PC-9 (cell line): ENCODE measurements at regions of chr17 and their contacts with region 1.

Region 1: GRCh38 chr17:82205719-82206508 is 6.7 kb downstream of the CCDC57 start:
- DNase-seq: peak; percentile 83 to 92
- H3K4me3 ChIP-seq: peak overlapping the region; percentile 13; the same call in 1 of the 2 replicates
- H3K27ac ChIP-seq: peak overlapping the region; percentile 82
- H3K4me1 ChIP-seq: peaks cover 28% of the 10 kb centered on the region
- H3K27me3 ChIP-seq: no peaks in the 10 kb centered on the region
- CTCF ChIP-seq: peak; percentile 87

Region 2: DNA sequence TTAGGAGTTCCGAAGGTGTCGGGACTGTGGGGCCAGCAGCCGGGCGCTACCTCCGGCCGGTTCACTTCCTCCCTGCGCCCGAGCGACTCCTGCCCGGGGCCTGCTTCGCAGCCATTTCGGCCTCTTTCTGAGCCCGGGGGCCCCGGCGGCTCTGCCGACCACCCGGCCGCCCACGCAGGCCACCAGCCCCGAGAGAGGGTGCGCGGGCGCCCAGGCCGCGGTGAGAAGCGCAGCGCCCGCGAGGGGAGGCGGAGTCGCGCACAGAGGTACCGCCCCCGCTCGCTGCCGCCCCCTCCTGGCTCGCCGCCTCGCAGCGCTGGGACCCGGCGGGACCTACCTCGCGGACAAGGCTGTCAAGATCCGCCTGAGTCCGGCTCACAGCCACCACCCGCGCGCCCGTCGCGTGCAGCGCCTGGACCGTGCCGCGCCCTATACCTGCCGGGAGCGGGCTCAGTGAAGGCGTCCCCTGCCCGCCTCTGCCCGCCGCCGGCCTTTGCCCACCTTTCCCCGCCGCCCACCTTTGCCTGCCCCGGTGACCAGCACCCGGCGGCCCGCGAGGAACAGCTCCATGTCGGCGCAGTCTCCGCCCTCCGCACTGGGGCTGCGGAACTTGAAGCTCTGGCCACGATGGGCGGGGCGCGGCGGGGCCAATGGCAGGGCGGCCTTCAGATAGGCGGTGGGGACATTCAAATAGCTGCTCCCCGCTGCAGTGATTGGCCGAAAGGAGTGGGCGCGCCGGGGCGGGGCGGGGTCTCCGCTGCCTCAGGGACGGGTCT is 168.6 kb before region 1 on chr17 and contains the start of gene DCXR:
- CTCF ChIA-PET with region 1: no interaction called
- POLR2A ChIA-PET with region 1: interaction called, 23 read pairs
- intact Hi-C with region 1: no loop called
- DNase-seq: peak; percentile 85 to 98
- H3K4me3 ChIP-seq: peak within 1 kb of the TSS; percentile 66
- H3K27ac ChIP-seq: no peak within 1 kb of the TSS
- H3K4me1 ChIP-seq: 0 out of 2 replicates have a peak, but pooled peaks cover 6% of the 10 kb centered on the region
- H3K27me3 ChIP-seq: no peaks in the 10 kb centered on the region
- CTCF ChIP-seq: peak; percentile 61
- total RNA-seq, gene DCXR: 120 and 129 TPM in 2 replicates

Region 3: DNA sequence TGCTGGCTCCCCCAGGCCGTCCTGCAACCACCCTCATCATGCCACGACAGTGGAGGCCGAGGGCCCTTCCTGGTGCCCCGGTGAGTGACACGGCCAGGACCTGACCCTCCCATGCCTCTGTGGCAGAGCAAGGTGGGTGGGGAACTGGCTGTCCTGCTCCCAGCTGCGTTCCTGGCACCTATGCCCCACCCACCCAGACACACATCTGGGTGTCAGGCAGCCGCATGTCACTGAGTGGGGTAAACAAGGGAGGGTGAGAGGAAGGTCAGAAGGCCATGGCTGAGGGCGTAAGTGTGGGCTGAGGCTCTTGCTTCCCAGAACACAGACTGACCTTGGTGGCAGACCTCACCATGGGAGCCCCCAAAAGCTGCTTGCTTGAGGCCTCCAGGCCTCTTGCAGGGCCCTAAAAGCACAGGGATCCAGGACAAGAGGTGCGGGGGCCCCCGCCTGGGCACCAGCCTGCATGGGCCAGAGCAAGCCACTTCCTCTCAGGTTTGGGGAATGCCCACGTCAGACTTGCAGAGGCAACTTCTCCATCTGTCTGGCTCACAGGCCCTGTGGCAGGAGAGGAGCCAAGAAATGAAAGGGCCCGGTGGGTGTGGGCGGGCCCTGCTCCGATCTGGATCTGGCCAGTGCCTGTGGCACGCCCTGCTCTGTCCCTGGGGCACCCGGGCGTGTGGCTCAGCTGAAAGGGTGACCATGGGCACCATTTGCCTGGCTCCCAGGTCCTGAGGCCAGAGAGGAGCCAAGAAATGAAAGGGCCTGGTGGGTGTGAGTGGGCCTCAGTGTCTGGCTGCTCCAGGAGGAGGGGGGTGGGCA is 10.6 kb after region 1 on chr17:
- CTCF ChIA-PET with region 1: no interaction called
- POLR2A ChIA-PET with region 1: interaction called, 11 read pairs
- intact Hi-C with region 1: no loop called
- DNase-seq: peak; percentile 69 to 86
- H3K4me3 ChIP-seq: peak overlapping the region; percentile 11; the same call in 1 of the 2 replicates
- H3K27ac ChIP-seq: peak overlapping the region; percentile 92
- H3K4me1 ChIP-seq: peaks cover 33% of the 10 kb centered on the region
- H3K27me3 ChIP-seq: no peaks in the 10 kb centered on the region
- CTCF ChIP-seq: no peak

Region 4: DNA sequence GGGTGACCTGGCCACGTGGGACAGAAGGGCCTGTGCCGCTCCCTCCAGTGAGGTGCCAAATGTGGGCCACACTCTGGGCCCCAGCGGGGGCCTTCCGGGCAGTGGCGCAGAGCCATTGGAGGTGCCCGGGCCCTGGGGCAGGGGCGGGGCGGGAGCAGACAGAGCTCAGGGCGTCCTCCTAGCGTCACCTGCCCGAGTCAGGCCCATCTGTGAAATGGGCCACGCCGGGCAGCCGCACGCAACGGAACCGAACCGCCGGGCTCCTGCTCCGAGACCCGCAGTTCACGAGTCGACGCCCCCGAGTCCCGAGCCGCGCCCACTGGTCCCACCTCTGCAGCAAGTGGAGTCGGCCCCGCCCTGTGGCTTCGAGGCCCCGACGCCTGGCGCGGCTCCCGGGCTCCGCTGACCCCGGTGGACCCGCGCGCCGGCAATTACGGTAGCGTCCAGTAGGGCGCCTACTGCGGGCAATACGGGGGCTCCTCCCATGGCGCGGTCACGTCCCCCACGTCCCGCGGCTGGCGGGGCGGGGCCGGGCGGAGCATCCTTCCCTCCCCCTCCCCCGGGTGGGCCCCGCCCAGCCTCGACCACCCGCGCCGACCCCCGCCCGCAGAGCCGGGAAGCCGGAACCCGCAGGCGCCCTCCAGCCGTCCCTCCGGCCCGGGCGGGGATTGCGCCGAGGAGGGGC is 24.9 kb after region 1 on chr17:
- CTCF ChIA-PET with region 1: interaction called, 8 read pairs
- POLR2A ChIA-PET with region 1: no interaction called
- intact Hi-C with region 1: loop called (anchors 1 kb)
- DNase-seq: peak in 1 of 2 experiments; percentile 85
- H3K4me3 ChIP-seq: peak overlapping the region; percentile 72
- H3K27ac ChIP-seq: peak overlapping the region; percentile 32; the same call in 1 of the 2 replicates
- H3K4me1 ChIP-seq: peaks cover 40% of the 10 kb centered on the region
- H3K27me3 ChIP-seq: no peaks in the 10 kb centered on the region
- CTCF ChIP-seq: peak; percentile 46

Region 5: DNA sequence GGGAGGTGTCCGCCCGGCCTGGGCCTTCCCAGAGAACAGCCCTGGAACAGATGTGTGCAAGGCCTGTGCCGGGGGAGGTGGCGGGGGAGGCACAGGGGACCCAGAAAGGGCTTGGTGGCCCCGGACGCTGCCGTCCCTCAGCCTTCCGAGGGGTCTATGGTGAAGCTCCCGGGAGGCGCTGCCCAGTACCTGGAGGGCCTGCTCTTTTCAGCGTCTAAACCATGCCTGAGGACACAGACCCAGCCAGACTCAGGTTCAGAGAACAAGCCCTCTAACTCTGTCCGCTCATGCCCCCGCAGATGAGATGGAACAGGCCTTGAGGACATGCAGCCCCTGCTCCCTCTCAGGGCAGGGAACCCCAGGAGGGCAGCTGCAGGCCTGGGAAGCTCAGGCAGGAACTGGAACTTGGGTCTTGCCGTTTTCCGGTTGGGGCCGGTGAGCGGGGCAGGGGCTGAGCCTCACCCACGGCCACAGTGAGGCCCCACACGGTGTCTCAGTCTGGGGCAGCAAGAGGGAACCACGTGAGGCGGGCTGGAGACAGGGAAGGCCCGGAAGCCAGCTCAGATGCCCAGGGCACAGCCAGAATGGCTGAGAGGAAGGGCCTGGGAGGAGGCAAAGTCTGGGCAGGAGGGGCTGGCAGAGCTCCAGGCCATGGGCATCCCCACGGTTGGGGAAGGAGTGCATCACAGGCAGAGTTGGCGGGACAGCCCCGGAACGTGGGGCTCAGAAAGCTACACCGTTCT is 35.4 kb after region 1 on chr17:
- CTCF ChIA-PET with region 1: interaction called, 9 read pairs
- POLR2A ChIA-PET with region 1: interaction called, 15 read pairs
- intact Hi-C with region 1: loop called (anchors 5 kb)
- DNase-seq: peak in 1 of 2 experiments; percentile 79
- H3K4me3 ChIP-seq: no peak overlapping the region
- H3K27ac ChIP-seq: no peak overlapping the region
- H3K4me1 ChIP-seq: peaks cover 10% of the 10 kb centered on the region
- H3K27me3 ChIP-seq: no peaks in the 10 kb centered on the region
- CTCF ChIP-seq: no peak

Region 6: GRCh38 chr17:82332669-82333278 is 126.9 kb after region 1 on chr17:
- CTCF ChIA-PET with region 1: no interaction called
- POLR2A ChIA-PET with region 1: interaction called, 10 read pairs
- intact Hi-C with region 1: no loop called
- DNase-seq: peak; percentile 44 to 47
- H3K4me3 ChIP-seq: peak overlapping the region; percentile 58
- H3K27ac ChIP-seq: no peak overlapping the region
- H3K4me1 ChIP-seq: peaks cover 4% of the 10 kb centered on the region; the same call in 1 of the 2 replicates
- H3K27me3 ChIP-seq: no peaks in the 10 kb centered on the region
- CTCF ChIP-seq: no peak

Region 7: DNA sequence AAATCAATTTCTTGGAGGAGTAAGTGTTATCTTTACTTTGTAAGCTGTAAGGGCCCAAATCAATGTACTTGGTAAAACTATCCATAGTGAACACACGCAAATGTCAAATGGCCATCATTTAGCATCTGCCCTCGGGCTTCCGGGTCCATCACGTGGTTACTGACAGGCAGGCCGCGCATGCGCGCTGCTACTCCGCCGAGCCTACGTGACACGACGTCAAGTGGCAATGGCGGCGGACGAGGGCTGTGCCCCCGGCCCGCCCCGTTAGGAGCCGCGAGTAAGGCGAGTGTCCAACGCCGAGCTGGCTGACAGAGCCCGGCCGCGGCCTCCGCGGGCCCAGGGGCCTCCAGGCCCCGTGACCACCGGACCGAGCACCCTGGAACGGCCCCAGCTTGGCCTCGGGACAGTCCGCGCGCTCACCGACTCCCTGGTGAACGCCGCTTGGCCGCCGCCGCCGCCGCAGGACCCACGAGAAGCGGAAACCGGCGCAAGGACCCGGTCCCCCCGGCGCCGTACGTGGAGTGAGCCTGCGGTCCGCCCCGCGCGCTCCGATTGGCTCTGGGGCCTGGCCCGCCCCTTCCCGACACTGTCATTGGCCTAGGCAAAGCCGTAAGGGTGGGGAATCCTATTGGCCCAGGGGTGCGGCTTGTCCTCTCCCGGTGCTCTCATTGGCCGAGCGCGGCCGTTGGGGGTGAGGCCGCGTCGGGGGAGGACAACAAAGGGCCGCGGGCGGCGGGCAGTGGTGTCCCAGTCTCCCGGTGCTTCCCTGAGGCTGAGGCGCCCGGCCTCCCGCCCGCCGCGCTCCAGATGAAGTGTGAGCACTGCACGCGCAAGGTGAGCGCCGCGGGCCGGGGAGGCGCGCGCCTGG is 252.3 kb after region 1 on chr17 and contains the start of gene NARF:
- CTCF ChIA-PET with region 1: interaction called, 11 read pairs
- POLR2A ChIA-PET with region 1: no interaction called
- intact Hi-C with region 1: no loop called
- DNase-seq: peak; percentile 90 to 95
- H3K4me3 ChIP-seq: peak within 1 kb of the TSS; percentile 71
- H3K27ac ChIP-seq: peak within 1 kb of the TSS; percentile 95
- H3K4me1 ChIP-seq: peaks cover 25% of the 10 kb centered on the region
- H3K27me3 ChIP-seq: no peaks in the 10 kb centered on the region
- CTCF ChIP-seq: no peak
- total RNA-seq, gene NARF: 57.2 and 58.0 TPM in 2 replicates